CD14-positive monocyte (primary cell): ENCODE measurements at regions of chr3 and their contacts with region 1.

Region 1: DNA sequence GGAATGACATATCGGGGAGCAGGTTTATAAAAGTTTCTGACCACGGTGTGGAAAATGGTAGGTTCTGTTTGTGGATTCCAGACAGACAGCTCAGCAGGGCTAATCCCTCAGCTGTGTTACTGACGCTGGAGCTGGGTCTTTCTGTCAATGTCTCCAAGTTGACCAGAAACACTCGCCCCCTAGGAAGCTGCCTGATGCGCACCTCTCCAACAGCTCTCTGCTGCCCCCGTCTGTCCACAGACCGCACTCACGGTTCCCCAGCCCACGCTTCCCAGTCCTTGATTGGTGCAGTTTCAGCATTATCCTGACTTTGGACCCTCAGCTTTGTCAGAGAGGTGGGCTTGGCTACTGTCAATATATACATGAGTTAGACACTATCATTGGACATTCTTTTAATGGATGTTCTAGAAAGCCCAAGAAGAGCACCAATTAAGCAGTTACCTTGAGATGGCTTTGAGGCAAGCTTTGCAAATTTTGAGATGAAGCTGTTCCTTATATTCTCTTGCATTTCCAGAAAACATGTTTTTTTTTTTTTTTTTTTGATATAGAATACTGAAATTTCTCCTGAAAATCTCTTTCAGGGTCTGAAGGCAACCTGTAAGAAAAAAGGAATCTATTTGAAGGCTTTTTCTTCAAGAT is 98.9 kb upstream of the TBC1D5 start:
- DNase-seq: peak; percentile 34 to 51 (median 50)
- H3K4me3 ChIP-seq: no peak overlapping the region
- H3K4me3 Mint-ChIP-seq: no peak overlapping the region
- H3K27ac ChIP-seq: no peak overlapping the region
- H3K27ac Mint-ChIP-seq: no peak overlapping the region
- H3K4me1 ChIP-seq: peaks cover 0 to 3% of the 10 kb centered on the region in 2 donors
- H3K4me1 Mint-ChIP-seq: peaks cover 6% of the 10 kb centered on the region
- H3K27me3 ChIP-seq: no peaks in the 10 kb centered on the region
- H3K27me3 Mint-ChIP-seq: no peaks in the 10 kb centered on the region
- CTCF ChIP-seq: peak; percentile 92

Region 2: DNA sequence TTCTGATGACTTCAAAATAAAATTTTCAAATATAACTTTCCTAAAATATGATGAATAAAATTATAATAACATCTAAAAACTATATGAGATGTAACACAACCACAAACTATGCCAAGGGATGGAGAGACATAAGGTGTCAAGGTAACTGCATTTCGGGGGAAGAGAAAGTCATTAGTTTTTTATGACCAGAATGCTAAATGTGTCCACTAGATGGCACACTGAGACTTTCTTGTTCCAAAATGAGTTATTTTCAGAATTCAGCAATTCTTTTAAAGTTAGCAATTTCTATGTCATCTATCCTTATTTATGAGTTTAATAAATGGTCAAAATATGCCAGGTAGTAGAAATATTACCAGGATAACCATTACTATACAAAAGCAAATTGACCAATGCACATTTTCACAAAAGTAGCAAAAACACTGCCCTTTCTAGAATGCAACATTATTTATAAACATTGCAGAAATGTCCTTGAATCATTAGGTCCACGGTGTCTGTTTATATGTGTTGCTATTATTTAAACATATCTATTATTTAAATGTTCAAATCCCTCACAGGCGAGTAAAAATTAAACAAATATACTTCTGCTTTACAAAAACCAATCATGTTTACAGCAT is 582.4 kb before region 1 on chr3:
- intact Hi-C with region 1: loop called in 1 of 2 experiments (anchors 10 kb)
- DNase-seq: peak; percentile 6 to 48 (median 25)
- H3K4me3 ChIP-seq: no peak overlapping the region
- H3K4me3 Mint-ChIP-seq: no peak overlapping the region
- H3K27ac ChIP-seq: no peak overlapping the region
- H3K27ac Mint-ChIP-seq: no peak overlapping the region
- H3K4me1 ChIP-seq: no peaks in the 10 kb centered on the region
- H3K4me1 Mint-ChIP-seq: no peaks in the 10 kb centered on the region
- H3K27me3 ChIP-seq: no peaks in the 10 kb centered on the region
- H3K27me3 Mint-ChIP-seq: no peaks in the 10 kb centered on the region
- CTCF ChIP-seq: peak; percentile 83

Region 3: DNA sequence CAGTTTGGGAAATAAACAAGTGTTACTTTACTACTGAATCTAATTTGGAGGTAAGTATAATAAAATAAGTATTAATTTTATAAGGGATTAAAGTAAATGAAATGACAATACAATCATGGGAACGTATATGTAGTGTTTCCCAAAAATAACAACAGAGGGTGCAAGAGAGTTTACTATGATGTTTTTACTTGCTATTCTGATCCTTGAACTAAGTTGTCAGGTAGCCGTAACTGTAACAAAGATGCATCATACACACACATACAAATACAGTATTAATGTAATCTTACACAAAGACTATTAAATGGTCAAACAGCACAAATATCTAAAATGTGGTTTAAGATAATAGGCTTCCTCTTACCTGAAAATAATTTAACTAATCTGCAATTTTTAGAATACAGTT is 410.3 kb before region 1 on chr3:
- intact Hi-C with region 1: loop called in 1 of 2 experiments (anchors 10 kb)
- DNase-seq: no peak
- H3K4me3 ChIP-seq: no peak overlapping the region
- H3K4me3 Mint-ChIP-seq: no peak overlapping the region
- H3K27ac ChIP-seq: no peak overlapping the region
- H3K27ac Mint-ChIP-seq: no peak overlapping the region
- H3K4me1 ChIP-seq: no peaks in the 10 kb centered on the region
- H3K4me1 Mint-ChIP-seq: no peaks in the 10 kb centered on the region
- H3K27me3 ChIP-seq: no peaks in the 10 kb centered on the region
- H3K27me3 Mint-ChIP-seq: no peaks in the 10 kb centered on the region
- CTCF ChIP-seq: peak; percentile 23

Region 4: DNA sequence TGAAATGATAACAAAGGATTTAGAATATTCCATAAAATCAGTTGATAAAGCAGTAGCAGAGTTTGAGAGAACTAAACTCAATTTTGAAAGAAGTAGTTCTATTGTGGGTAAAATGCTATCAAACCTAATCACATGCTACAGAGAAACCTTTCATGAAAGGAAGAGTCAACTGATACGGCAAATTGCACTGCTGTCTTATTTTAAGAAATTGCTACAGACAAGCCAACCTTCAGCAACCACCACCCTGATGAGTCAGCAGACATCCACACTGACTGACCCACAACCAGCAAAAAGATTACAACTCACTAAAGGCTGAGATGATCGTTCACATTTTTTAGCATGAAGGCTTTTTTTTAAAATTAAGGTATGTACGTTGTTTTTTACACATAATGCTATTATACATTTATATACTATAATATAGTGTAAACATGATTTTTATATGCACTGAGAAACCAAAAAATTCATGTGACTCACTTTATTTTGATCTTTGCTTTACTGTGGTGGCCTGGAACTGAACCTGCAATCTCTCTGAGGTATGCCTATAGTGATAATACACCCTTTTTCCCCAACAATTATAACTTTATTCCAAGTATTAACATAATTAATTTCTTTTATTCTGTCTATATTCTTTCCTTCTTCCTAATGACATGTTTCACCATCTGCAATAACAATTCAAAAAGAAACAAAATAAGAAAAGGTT is 208.8 kb before region 1 on chr3:
- intact Hi-C with region 1: loop called in 1 of 2 experiments (anchors 10 kb)
- DNase-seq: peak; percentile 50 to 57 (median 55)
- H3K4me3 ChIP-seq: no peak overlapping the region
- H3K4me3 Mint-ChIP-seq: no peak overlapping the region
- H3K27ac ChIP-seq: peak overlapping the region in 1 of 2 donors; percentile 52
- H3K27ac Mint-ChIP-seq: peak overlapping the region in 5 of 7 donors; percentile 48 to 80 (median 54)
- H3K4me1 ChIP-seq: peaks cover 3 to 28% of the 10 kb centered on the region in 2 donors
- H3K4me1 Mint-ChIP-seq: peaks cover 33% of the 10 kb centered on the region
- H3K27me3 ChIP-seq: no peaks in the 10 kb centered on the region
- H3K27me3 Mint-ChIP-seq: peaks cover 0 to 2% (median 0%) of the 10 kb centered on the region in 3 donors
- CTCF ChIP-seq: no peak

Region 5: DNA sequence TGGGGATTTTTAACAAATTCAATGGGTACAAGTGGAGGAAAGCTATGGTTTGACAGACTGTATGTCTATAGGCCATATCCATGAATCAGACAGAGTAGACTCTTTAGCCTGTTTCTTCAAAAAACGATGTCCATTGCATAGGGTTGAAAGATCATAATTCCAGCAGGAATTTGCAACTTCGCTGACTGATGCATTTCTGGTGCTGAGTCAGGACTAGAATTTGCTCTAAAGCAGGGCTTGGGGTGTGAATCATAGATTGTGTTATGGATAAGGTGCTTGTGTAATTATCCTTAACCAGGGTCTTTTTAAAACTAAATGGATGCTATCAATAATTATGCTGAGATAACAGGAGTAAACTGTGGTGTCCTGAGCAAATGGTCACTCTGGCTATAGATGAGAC is 101.5 kb after region 1 on chr3:
- intact Hi-C with region 1: no loop called
- DNase-seq: no peak
- H3K4me3 ChIP-seq: no peak overlapping the region
- H3K4me3 Mint-ChIP-seq: no peak overlapping the region
- H3K27ac ChIP-seq: no peak overlapping the region
- H3K27ac Mint-ChIP-seq: no peak overlapping the region
- H3K4me1 ChIP-seq: peaks cover 6 to 11% of the 10 kb centered on the region in 2 donors
- H3K4me1 Mint-ChIP-seq: peaks cover 25% of the 10 kb centered on the region
- H3K27me3 ChIP-seq: no peaks in the 10 kb centered on the region
- H3K27me3 Mint-ChIP-seq: peaks cover 0 to 1% (median 0%) of the 10 kb centered on the region in 3 donors
- CTCF ChIP-seq: no peak